ENCODE measurements at regions of chr4 and their contacts with region 1.

Region 1: GRCh38 chr4:114479595-114479994 is 119.0 kb upstream of the UGT8 start:
- DNase-seq: no peak
- ATAC-seq: no peak
- H3K4me3 ChIP-seq: no peak overlapping the region
- H3K4me3 Mint-ChIP-seq: no peak overlapping the region
- H3K27ac ChIP-seq: no peak overlapping the region
- H3K27ac Mint-ChIP-seq: no peak overlapping the region
- H3K4me1 ChIP-seq: no peaks in the 10 kb centered on the region
- H3K4me1 Mint-ChIP-seq: no peaks in the 10 kb centered on the region
- H3K27me3 ChIP-seq: no peaks in the 10 kb centered on the region
- H3K27me3 Mint-ChIP-seq: peaks cover 9% of the 10 kb centered on the region
- CTCF ChIP-seq: no peak

Region 2: DNA sequence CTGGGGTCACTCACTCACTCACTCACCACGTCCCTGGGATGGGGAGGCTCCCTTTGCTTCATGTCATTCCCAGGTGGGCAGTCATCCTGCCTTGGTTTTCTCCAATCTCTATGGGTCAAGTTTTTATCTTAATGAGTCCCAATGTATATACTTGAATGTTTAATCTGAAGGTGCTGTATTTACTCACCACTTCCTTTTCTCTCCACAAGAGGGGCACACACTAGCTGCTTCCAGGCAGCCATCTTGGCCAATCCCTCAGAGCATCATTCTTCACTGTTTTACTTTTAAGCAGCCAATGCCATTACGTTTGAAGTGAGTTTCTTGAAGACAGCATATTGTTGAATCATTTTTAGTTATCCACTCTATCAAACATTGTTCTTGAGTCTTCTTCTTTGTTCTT is 346.8 kb before region 1 on chr4:
- CTCF ChIA-PET with region 1: no interaction called
- POLR2A ChIA-PET with region 1: no interaction called
- intact Hi-C with region 1: no loop called
- DNase-seq: no peak
- ATAC-seq: peak; percentile 33
- H3K4me3 ChIP-seq: no peak overlapping the region
- H3K4me3 Mint-ChIP-seq: no peak overlapping the region
- H3K27ac ChIP-seq: no peak overlapping the region
- H3K27ac Mint-ChIP-seq: no peak overlapping the region
- H3K4me1 ChIP-seq: no peaks in the 10 kb centered on the region
- H3K4me1 Mint-ChIP-seq: no peaks in the 10 kb centered on the region
- H3K27me3 ChIP-seq: no peaks in the 10 kb centered on the region
- H3K27me3 Mint-ChIP-seq: peaks cover 5% of the 10 kb centered on the region
- CTCF ChIP-seq: peak; percentile 46

Region 3: GRCh38 chr4:114263233-114263632 is 216.4 kb before region 1 on chr4:
- CTCF ChIA-PET with region 1: no interaction called
- POLR2A ChIA-PET with region 1: no interaction called
- intact Hi-C with region 1: loop called (anchors 10 kb)
- DNase-seq: no peak
- ATAC-seq: no peak
- H3K4me3 ChIP-seq: no peak overlapping the region
- H3K4me3 Mint-ChIP-seq: no peak overlapping the region
- H3K27ac ChIP-seq: no peak overlapping the region
- H3K27ac Mint-ChIP-seq: no peak overlapping the region
- H3K4me1 ChIP-seq: no peaks in the 10 kb centered on the region
- H3K4me1 Mint-ChIP-seq: no peaks in the 10 kb centered on the region
- H3K27me3 ChIP-seq: no peaks in the 10 kb centered on the region
- H3K27me3 Mint-ChIP-seq: no peaks in the 10 kb centered on the region
- CTCF ChIP-seq: no peak